ENCODE measurements at regions of chr5 and their contacts with region 1.

Region 1: GRCh38 chr5:114695292-114695904 is 333.5 kb downstream of the KCNN2 start:
- DNase-seq: no peak
- H3K4me3 ChIP-seq: no peak overlapping the region
- H3K27ac ChIP-seq: no peak overlapping the region
- H3K4me1 ChIP-seq: no peaks in the 10 kb centered on the region
- H3K27me3 ChIP-seq: no peaks in the 10 kb centered on the region
- CTCF ChIP-seq: no peak
- POLR2A ChIP-seq: no peak

Region 2: DNA sequence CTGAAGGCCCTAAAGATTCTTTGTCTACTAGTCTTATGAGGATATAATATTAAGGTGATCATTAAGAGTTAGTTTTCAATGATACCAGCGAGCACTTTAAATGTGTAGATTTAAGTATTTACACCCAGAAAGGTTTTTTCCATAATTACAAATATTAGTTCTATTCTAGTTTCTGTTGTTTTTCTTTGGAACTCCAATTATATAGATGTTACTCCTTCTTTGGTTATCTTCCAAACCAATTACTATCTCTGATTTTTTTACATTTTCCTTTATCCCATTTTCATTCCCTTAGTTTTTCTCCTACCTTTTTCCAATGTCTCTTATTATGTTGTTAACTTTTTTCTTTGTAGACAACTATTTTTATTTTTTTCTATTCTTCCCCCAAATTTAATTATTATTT is 21.6 kb after region 1 on chr5:
- intact Hi-C with region 1: loop called (anchors 2 kb)
- DNase-seq: no peak
- H3K4me3 ChIP-seq: no peak overlapping the region
- H3K27ac ChIP-seq: no peak overlapping the region
- H3K4me1 ChIP-seq: no peaks in the 10 kb centered on the region
- H3K27me3 ChIP-seq: no peaks in the 10 kb centered on the region
- CTCF ChIP-seq: no peak
- POLR2A ChIP-seq: no peak

Measured in vagina (tissue), 2 donors.